Calu3 (cell line): ENCODE measurements at regions of chr12 and their contacts with region 1.

Region 1: GRCh38 chr12:50314629-50315312 is 31.5 kb upstream of the LIMA1 start:
- DNase-seq: peak; percentile 7
- H3K4me3 Mint-ChIP-seq: no peak overlapping the region
- H3K27ac Mint-ChIP-seq: no peak overlapping the region
- H3K4me1 Mint-ChIP-seq: peaks cover 20% of the 10 kb centered on the region
- H3K27me3 Mint-ChIP-seq: no peaks in the 10 kb centered on the region
- CTCF ChIP-seq: peak; percentile 38

Region 2: GRCh38 chr12:50132505-50133135 is 182.2 kb before region 1 on chr12:
- CTCF ChIA-PET with region 1: interaction called, 3 read pairs
- intact Hi-C with region 1: loop called (anchors 2 kb)
- DNase-seq: no peak
- H3K4me3 Mint-ChIP-seq: no peak overlapping the region
- H3K27ac Mint-ChIP-seq: no peak overlapping the region
- H3K4me1 Mint-ChIP-seq: no peaks in the 10 kb centered on the region
- H3K27me3 Mint-ChIP-seq: no peaks in the 10 kb centered on the region
- CTCF ChIP-seq: peak; percentile 39

Region 3: DNA sequence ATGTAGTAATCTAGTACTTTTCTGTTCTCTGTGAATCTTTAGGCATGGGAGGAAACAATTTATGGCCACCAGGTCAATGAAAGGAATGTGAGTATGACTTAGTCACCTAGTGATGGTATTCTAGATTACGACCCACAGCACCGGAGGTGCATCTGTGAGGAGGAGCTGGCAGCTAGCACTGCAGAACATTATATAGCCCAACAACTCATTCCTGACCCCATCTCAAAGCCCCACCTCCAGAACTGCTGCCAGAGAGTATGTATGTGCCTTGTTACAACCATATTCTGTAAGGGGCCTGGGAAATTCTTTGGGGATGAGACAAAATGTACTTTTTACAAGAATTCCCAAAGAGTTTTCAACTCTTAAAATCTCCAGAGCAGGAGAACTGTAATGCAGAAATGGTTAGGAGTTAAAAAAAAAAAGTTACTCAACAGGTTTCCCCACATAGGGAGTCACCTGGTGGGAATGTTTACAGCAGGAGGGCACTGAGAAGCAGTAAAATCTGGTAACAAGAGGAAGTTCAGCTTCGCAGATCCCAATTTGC is 112.7 kb before region 1 on chr12:
- CTCF ChIA-PET with region 1: interaction called, 3 read pairs
- intact Hi-C with region 1: loop called (anchors 5 kb)
- DNase-seq: peak; percentile 42
- H3K4me3 Mint-ChIP-seq: no peak overlapping the region
- H3K27ac Mint-ChIP-seq: peak overlapping the region; percentile 72
- H3K4me1 Mint-ChIP-seq: peaks cover 14% of the 10 kb centered on the region
- H3K27me3 Mint-ChIP-seq: no peaks in the 10 kb centered on the region
- CTCF ChIP-seq: no peak

Region 4: DNA sequence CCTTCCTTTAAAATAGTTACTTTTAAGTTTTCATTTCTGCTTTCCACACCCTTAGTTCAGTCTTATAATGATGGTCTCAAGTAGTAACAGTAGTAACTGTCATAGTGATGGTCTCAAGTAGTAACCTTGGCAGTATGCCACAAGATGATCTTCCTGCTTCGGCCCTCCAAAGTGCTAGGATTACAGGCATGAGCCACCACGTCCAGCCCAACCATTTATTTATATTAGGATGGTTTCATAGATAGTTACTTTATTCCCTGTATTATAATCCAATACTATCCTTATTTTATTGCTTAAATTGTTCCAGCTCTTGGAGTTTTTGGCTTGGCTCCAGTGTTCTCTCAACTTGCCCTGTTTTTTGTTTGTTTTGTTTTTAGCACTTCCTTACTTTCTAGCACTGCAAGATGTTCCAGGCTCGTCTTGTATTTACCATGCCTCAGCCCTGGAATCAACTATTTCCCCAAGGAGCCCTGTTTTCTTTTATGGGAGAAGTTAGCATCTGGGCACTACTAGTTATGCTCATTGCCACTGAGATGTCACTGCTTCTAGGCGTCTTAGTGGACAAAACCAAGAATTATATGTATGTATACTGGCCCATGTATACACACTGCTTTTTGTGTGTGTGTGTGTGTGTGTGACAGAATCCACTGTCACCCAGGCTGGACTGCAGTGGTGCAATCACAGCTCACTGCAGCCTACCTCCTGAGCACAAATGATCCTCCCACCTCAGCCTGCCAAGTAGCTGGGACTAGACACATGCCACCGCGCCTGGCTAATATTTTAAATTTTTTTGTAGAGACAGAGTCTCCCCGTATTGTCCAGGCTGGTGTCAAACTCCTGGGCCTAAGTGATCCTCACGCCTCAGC is 56.9 kb before region 1 on chr12:
- CTCF ChIA-PET with region 1: interaction called, 7 read pairs
- intact Hi-C with region 1: loop called (anchors 5 kb)
- DNase-seq: no peak
- H3K4me3 Mint-ChIP-seq: peak overlapping the region; percentile 31
- H3K27ac Mint-ChIP-seq: peak overlapping the region; percentile 92
- H3K4me1 Mint-ChIP-seq: peaks cover 75% of the 10 kb centered on the region
- H3K27me3 Mint-ChIP-seq: no peaks in the 10 kb centered on the region
- CTCF ChIP-seq: no peak

Region 5: DNA sequence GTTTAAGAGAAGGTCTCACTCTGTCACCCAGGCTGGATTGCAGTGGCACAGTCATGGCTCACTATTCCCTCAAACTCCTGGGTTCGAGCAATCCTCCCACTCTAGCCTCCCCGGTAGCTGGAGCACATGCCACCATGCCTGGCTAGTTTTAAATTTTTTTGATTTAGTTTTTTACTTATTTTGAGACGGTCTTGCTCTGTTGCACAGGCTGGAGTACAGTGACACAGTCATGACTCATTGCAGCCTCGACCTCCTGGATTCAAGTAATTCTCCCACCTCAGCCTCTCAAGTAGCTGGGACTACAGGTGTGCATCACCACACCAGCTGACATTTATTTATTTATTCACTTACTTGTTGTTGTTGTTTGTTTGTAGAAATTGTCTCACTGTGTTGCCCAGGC is 167.8 kb after region 1 on chr12:
- CTCF ChIA-PET with region 1: no interaction called
- intact Hi-C with region 1: no loop called
- DNase-seq: no peak
- H3K4me3 Mint-ChIP-seq: no peak overlapping the region
- H3K27ac Mint-ChIP-seq: no peak overlapping the region
- H3K4me1 Mint-ChIP-seq: no peaks in the 10 kb centered on the region
- H3K27me3 Mint-ChIP-seq: no peaks in the 10 kb centered on the region
- CTCF ChIP-seq: no peak